ENCODE measurements at regions of chr19 and their contacts with region 1.

Region 1: DNA sequence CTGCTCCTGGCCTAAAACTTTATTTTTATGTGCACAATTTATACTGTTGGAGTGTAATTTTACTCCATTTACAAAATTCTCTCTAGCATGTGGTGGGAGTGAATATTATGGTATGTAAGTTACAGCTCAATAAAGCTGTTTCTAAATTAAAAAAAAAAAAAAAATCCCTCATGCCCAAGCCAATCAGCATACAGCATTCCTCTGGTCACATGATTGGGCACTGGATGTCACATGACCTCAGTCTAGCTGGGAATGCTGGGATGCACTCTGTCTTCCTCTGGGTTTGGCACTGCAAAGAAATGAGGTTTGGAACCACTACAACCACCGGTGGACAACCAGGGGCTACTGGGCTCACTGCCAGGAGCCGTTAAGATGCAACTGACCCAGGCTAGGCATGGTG is 67.6 kb downstream of the ZNF557 start:
- DNase-seq: no peak
- ATAC-seq: no peak
- H3K4me3 ChIP-seq: no peak overlapping the region
- H3K27ac ChIP-seq: no peak overlapping the region
- H3K4me1 ChIP-seq: peaks cover 41% of the 10 kb centered on the region
- H3K27me3 ChIP-seq: no peaks in the 10 kb centered on the region
- CTCF ChIP-seq: no peak

Region 2: DNA sequence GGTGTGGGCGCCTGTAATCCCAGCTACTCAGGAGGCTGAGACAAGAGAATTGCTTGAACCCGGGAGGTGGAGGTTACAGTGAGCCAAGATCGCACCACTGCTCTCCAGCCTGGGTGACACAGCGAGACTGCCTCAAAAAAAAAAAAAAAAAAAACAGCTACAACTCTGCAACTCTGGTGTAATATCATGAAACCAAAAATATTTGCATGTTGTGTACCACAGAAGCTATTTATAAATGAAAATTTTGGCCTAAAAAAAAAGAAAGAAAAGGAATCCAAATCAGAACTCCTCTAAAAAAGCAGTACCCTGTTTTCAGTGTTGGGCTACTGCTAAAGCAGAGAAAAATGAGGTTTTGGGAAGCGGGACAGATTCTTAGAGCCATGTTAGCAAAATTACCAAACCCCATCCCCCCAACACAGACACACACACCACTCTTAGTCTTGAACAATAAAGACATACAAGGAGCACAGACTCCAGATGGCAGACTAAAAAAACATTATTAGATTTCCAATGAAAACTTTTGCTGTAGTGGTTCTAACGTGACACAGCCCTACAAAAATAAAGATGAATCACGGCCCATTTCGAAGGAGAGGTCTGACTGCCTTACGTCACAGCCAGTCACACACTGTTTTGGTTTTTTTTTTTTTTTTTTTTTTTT is 105.6 kb after region 1 on chr19:
- CTCF ChIA-PET with region 1: interaction called, 12 read pairs
- POLR2A ChIA-PET with region 1: no interaction called
- intact Hi-C with region 1: no loop called
- DNase-seq: peak; percentile 33
- ATAC-seq: no peak
- H3K4me3 ChIP-seq: no peak overlapping the region
- H3K27ac ChIP-seq: no peak overlapping the region
- H3K4me1 ChIP-seq: no peaks in the 10 kb centered on the region
- H3K27me3 ChIP-seq: no peaks in the 10 kb centered on the region
- CTCF ChIP-seq: no peak

Region 3: GRCh38 chr19:7288977-7289376 is 151.9 kb after region 1 on chr19:
- CTCF ChIA-PET with region 1: no interaction called
- POLR2A ChIA-PET with region 1: interaction called, 18 read pairs
- intact Hi-C with region 1: no loop called
- DNase-seq: no peak
- ATAC-seq: no peak
- H3K4me3 ChIP-seq: no peak overlapping the region
- H3K27ac ChIP-seq: no peak overlapping the region
- H3K4me1 ChIP-seq: peaks cover 9% of the 10 kb centered on the region; the same call in 1 of the 2 replicates
- H3K27me3 ChIP-seq: no peaks in the 10 kb centered on the region
- CTCF ChIP-seq: no peak

Region 4: DNA sequence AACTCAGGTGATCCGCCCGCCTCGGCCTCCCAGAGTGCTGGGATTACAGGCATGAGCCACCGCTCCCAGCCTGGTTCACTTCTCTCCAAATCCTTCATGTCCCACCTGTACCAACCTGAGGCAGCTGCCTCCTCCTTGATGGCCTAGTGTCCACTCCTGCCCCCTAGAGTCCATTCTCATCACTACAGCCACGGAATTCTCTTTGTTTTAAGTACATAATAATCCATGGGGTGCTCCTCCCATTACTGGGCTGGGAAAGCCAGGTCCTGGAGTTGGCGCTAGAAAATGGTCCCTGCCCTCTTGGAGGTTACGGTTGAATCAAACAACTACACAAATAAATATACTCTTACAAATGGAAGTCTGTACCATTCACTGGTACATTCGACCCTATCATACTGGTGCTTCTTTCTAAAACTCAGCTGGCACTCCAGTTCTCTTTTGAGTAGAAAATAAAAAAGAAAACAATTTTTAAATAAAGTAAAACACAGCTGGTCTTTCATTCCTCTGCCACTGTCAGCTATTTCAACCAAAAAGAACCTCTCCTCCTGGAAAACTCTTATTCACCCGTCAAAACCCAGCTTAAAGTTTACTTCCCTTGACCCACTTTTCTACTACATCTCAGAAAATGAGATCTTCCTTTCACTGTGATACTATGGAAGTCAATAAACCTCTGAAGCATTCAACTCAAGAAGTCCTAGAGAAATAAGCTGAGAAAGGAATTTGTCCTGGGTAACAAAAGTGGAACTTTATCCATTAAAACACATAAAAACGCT is 189.2 kb after region 1 on chr19:
- CTCF ChIA-PET with region 1: no interaction called
- POLR2A ChIA-PET with region 1: no interaction called
- intact Hi-C with region 1: no loop called
- DNase-seq: peak; percentile 79
- ATAC-seq: peak; percentile 42; the same call in 1 of the 2 replicates
- H3K4me3 ChIP-seq: no peak overlapping the region
- H3K27ac ChIP-seq: no peak overlapping the region
- H3K4me1 ChIP-seq: no peaks in the 10 kb centered on the region
- H3K27me3 ChIP-seq: no peaks in the 10 kb centered on the region
- CTCF ChIP-seq: peak; percentile 75